ENCODE measurements at regions of chr15 and their contacts with region 1.

Region 1: GRCh38 chr15:62060113-62060895 is at the start of gene VPS13C:
- DNase-seq: peak; percentile 97
- ATAC-seq: peak; percentile 81
- H3K4me3 ChIP-seq: peak within 1 kb of the TSS; percentile 66 to 99 (median 93)
- H3K4me3 Mint-ChIP-seq: peak within 1 kb of the TSS; percentile 96
- H3K27ac ChIP-seq: peak within 1 kb of the TSS; percentile 94 to 95
- H3K27ac Mint-ChIP-seq: peak within 1 kb of the TSS; percentile 98
- H3K4me1 ChIP-seq: peaks cover 15 to 21% of the 10 kb centered on the region in 2 donors
- H3K4me1 Mint-ChIP-seq: peaks cover 42% of the 10 kb centered on the region
- H3K27me3 ChIP-seq: peaks cover 0 to 6% (median under 1%) of the 10 kb centered on the region in 4 experiments
- H3K27me3 Mint-ChIP-seq: peaks cover 9% of the 10 kb centered on the region
- CTCF ChIP-seq: peak; percentile 84
- total RNA-seq, gene VPS13C: 236 and 258 TPM in 2 replicates

Region 2: DNA sequence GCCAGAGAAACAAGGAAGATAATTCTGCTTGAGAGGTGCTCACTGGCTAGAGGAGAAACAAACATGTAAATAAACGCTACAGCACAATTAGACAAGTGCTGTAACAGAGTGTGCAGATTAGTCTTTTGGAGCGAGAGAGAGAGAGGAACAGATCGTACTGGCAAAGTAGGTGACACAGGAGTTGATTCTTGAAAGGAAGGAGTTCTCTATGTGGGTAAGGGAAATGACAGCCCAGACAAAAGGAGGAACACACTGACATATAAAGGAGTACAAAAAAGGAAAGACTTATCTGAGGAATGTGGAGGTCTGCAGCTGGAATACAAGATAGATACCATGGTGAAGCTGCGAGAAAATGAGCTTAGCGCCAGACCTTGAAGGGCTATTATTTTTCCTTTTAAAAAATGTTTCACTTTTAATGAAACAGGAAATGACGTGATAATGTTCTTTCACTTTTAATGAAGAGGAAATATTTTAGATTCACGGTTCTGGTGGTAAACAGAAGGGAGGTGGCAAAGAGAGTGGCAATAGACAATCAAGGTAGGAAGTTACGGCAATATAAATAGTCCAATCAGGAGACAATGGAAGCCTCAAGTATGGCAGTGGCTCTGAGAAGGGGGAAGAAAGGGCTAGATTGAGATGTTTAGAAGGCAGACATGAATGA is 203.0 kb before region 1 on chr15:
- CTCF ChIA-PET with region 1: no interaction called
- POLR2A ChIA-PET with region 1: no interaction called
- intact Hi-C with region 1: loop called (anchors 2 kb)
- DNase-seq: peak; percentile 59
- ATAC-seq: peak; percentile 61
- H3K4me3 ChIP-seq: peak overlapping the region in 3 of 5 experiments; percentile 18 to 43 (median 31)
- H3K4me3 Mint-ChIP-seq: no peak overlapping the region
- H3K27ac ChIP-seq: peak overlapping the region; percentile 38 to 69
- H3K27ac Mint-ChIP-seq: no peak overlapping the region
- H3K4me1 ChIP-seq: peaks cover 11 to 16% of the 10 kb centered on the region in 2 donors
- H3K4me1 Mint-ChIP-seq: peaks cover 5% of the 10 kb centered on the region
- H3K27me3 ChIP-seq: no peaks in the 10 kb centered on the region
- H3K27me3 Mint-ChIP-seq: no peaks in the 10 kb centered on the region
- CTCF ChIP-seq: no peak

Region 3: DNA sequence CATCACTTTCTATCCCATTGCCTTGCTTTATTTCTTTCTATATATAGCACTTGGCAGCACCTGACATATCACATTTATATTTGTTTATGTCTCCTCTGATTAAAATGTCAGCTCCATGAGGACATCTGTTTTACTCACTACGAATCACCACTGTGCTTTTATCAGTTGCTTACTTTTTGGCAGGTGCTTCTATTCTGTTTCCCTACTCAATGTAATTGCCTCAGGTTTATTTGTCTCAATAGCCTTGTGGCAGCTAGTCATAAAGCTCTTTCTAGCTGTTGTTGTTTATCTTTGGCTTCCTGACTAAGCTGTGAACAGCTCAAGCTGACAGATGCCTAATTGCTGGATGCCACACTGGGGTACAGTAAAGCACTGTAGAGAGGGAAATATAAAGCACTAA is 85.5 kb before region 1 on chr15:
- CTCF ChIA-PET with region 1: interaction called, 5 read pairs
- POLR2A ChIA-PET with region 1: no interaction called
- intact Hi-C with region 1: loop called (anchors 10 kb)
- DNase-seq: no peak
- ATAC-seq: no peak
- H3K4me3 ChIP-seq: no peak overlapping the region
- H3K4me3 Mint-ChIP-seq: no peak overlapping the region
- H3K27ac ChIP-seq: no peak overlapping the region
- H3K27ac Mint-ChIP-seq: no peak overlapping the region
- H3K4me1 ChIP-seq: no peaks in the 10 kb centered on the region
- H3K4me1 Mint-ChIP-seq: no peaks in the 10 kb centered on the region
- H3K27me3 ChIP-seq: no peaks in the 10 kb centered on the region
- H3K27me3 Mint-ChIP-seq: no peaks in the 10 kb centered on the region
- CTCF ChIP-seq: no peak

Region 4: DNA sequence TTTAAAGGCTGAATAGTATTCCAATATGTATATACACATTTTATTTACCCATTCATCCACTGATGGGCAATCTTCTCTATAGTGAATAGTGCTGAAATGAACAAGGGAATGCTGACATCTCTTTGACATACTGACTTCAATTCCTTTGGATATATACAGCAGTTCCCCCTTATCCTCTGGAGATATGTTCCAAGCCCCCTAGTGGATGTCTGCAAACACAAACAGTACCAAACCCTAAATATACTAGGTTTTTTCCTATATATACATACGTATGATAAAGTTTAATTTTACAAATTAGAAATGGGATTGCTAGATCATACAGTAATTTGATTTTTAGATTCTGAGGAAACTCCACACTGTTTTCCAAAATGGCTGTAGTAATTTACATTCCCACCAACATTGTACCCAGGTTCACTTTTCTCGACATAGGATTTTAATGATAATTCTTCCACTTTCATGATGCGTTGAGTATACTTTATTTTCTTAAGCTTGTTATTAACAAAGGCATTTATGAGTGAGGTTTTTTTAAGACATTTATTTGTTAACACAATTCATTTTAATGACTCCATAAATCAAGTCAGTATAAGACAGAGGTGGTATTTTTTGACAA is 38.2 kb before region 1 on chr15:
- CTCF ChIA-PET with region 1: interaction called, 37 read pairs
- POLR2A ChIA-PET with region 1: interaction called, 4 read pairs
- intact Hi-C with region 1: loop called (anchors 1 kb)
- DNase-seq: no peak
- ATAC-seq: no peak
- H3K4me3 ChIP-seq: no peak overlapping the region
- H3K4me3 Mint-ChIP-seq: no peak overlapping the region
- H3K27ac ChIP-seq: no peak overlapping the region
- H3K27ac Mint-ChIP-seq: no peak overlapping the region
- H3K4me1 ChIP-seq: peaks cover 0 to 7% of the 10 kb centered on the region in 2 donors
- H3K4me1 Mint-ChIP-seq: peaks cover 12% of the 10 kb centered on the region
- H3K27me3 ChIP-seq: no peaks in the 10 kb centered on the region
- H3K27me3 Mint-ChIP-seq: no peaks in the 10 kb centered on the region
- CTCF ChIP-seq: peak; percentile 34

Region 5: DNA sequence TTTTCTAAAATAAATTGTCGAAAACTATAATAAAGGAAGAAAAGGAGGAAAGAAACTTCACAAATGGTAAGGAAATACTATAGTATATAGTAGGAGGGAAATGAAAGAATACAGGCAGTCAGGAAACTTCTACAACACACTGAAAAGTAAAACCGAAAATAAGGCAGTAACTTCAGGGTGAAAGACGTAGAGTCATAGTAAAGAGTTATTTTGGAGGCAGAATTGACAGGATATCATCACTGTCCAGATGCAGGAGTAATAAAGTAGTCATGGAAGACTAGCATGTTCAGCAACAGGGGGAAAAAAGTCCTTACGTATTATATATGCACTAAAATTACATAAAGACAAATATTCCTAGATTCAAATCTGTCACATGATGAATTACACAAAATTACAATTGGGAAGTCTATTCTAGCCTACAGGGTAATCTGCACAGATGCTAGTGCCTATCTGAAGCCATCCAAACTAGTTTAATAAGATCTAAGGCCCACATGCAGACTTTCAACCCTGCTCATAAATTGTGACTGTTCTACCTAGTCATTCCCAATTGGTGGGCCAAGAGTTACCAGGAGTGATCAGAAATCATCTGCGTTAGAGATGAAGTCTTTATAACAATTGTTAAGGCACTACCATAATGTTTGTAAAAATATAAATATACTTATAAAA is 14.1 kb before region 1 on chr15:
- CTCF ChIA-PET with region 1: interaction called, 7 read pairs
- POLR2A ChIA-PET with region 1: interaction called, 3 read pairs
- intact Hi-C with region 1: loop called (anchors 1 kb)
- DNase-seq: no peak
- ATAC-seq: peak; percentile 41
- H3K4me3 ChIP-seq: peak overlapping the region in 2 of 5 experiments; percentile 14 to 39
- H3K4me3 Mint-ChIP-seq: peak overlapping the region; percentile 77
- H3K27ac ChIP-seq: peak overlapping the region; percentile 25 to 70
- H3K27ac Mint-ChIP-seq: peak overlapping the region; percentile 66
- H3K4me1 ChIP-seq: peaks cover 19 to 28% of the 10 kb centered on the region in 2 donors
- H3K4me1 Mint-ChIP-seq: peaks cover 40% of the 10 kb centered on the region
- H3K27me3 ChIP-seq: no peaks in the 10 kb centered on the region
- H3K27me3 Mint-ChIP-seq: no peaks in the 10 kb centered on the region
- CTCF ChIP-seq: no peak

Region 6: GRCh38 chr15:62119227-62119864 is 59.0 kb after region 1 on chr15:
- CTCF ChIA-PET with region 1: no interaction called
- POLR2A ChIA-PET with region 1: no interaction called
- intact Hi-C with region 1: no loop called
- DNase-seq: no peak
- ATAC-seq: no peak
- H3K4me3 ChIP-seq: no peak overlapping the region
- H3K4me3 Mint-ChIP-seq: no peak overlapping the region
- H3K27ac ChIP-seq: no peak overlapping the region
- H3K27ac Mint-ChIP-seq: no peak overlapping the region
- H3K4me1 ChIP-seq: no peaks in the 10 kb centered on the region
- H3K4me1 Mint-ChIP-seq: peaks cover 5% of the 10 kb centered on the region
- H3K27me3 ChIP-seq: peaks cover 0 to 6% (median 1%) of the 10 kb centered on the region in 4 experiments
- H3K27me3 Mint-ChIP-seq: peaks cover 15% of the 10 kb centered on the region
- CTCF ChIP-seq: no peak

Region 7: GRCh38 chr15:63122002-63122893 is 1061.9 kb after region 1 on chr15:
- CTCF ChIA-PET with region 1: no interaction called
- POLR2A ChIA-PET with region 1: no interaction called
- intact Hi-C with region 1: loop called (anchors 5 kb)
- DNase-seq: peak; percentile 87
- ATAC-seq: peak; percentile 87
- H3K4me3 ChIP-seq: peak overlapping the region; percentile 66 to 95 (median 88)
- H3K4me3 Mint-ChIP-seq: peak overlapping the region; percentile 86
- H3K27ac ChIP-seq: peak overlapping the region; percentile 71 to 85
- H3K27ac Mint-ChIP-seq: peak overlapping the region; percentile 93
- H3K4me1 ChIP-seq: peaks cover 6 to 9% of the 10 kb centered on the region in 2 donors
- H3K4me1 Mint-ChIP-seq: peaks cover 14% of the 10 kb centered on the region
- H3K27me3 ChIP-seq: no peaks in the 10 kb centered on the region
- H3K27me3 Mint-ChIP-seq: no peaks in the 10 kb centered on the region
- CTCF ChIP-seq: peak; percentile 12